Left ventricle myocardium inferior (tissue), 1 donor: ENCODE measurements at regions of chr20 and their contacts with region 1.

Region 1: GRCh38 chr20:8853805-8854338 is 215.0 kb upstream of the PLCB4 start:
- DNase-seq: no peak
- H3K4me3 ChIP-seq: peak overlapping the region; percentile 43
- H3K27ac ChIP-seq: peak overlapping the region; percentile 79
- H3K4me1 ChIP-seq: peaks cover 24% of the 10 kb centered on the region
- H3K27me3 ChIP-seq: no peaks in the 10 kb centered on the region
- CTCF ChIP-seq: peak; percentile 91

Region 2: GRCh38 chr20:7406671-7407070 is 1447.2 kb before region 1 on chr20:
- intact Hi-C with region 1: no loop called
- DNase-seq: no peak
- H3K4me3 ChIP-seq: no peak overlapping the region
- H3K27ac ChIP-seq: no peak overlapping the region
- H3K4me1 ChIP-seq: no peaks in the 10 kb centered on the region
- H3K27me3 ChIP-seq: peaks cover 8% of the 10 kb centered on the region
- CTCF ChIP-seq: no peak

Region 3: GRCh38 chr20:8583566-8584043 is 270.3 kb before region 1 on chr20:
- intact Hi-C with region 1: no loop called
- DNase-seq: no peak
- H3K4me3 ChIP-seq: no peak overlapping the region
- H3K27ac ChIP-seq: no peak overlapping the region
- H3K4me1 ChIP-seq: no peaks in the 10 kb centered on the region
- H3K27me3 ChIP-seq: no peaks in the 10 kb centered on the region
- CTCF ChIP-seq: no peak

Region 4: GRCh38 chr20:8946036-8946940 is 92.4 kb after region 1 on chr20:
- intact Hi-C with region 1: loop called (anchors 10 kb)
- DNase-seq: no peak
- H3K4me3 ChIP-seq: no peak overlapping the region
- H3K27ac ChIP-seq: peak overlapping the region; percentile 74
- H3K4me1 ChIP-seq: peaks cover 32% of the 10 kb centered on the region
- H3K27me3 ChIP-seq: no peaks in the 10 kb centered on the region
- CTCF ChIP-seq: no peak

Region 5: GRCh38 chr20:9130521-9130920 is 276.6 kb after region 1 on chr20:
- intact Hi-C with region 1: loop called (anchors 10 kb)
- DNase-seq: no peak
- H3K4me3 ChIP-seq: no peak overlapping the region
- H3K27ac ChIP-seq: peak overlapping the region; percentile 67
- H3K4me1 ChIP-seq: peaks cover 60% of the 10 kb centered on the region
- H3K27me3 ChIP-seq: no peaks in the 10 kb centered on the region
- CTCF ChIP-seq: no peak

Region 6: DNA sequence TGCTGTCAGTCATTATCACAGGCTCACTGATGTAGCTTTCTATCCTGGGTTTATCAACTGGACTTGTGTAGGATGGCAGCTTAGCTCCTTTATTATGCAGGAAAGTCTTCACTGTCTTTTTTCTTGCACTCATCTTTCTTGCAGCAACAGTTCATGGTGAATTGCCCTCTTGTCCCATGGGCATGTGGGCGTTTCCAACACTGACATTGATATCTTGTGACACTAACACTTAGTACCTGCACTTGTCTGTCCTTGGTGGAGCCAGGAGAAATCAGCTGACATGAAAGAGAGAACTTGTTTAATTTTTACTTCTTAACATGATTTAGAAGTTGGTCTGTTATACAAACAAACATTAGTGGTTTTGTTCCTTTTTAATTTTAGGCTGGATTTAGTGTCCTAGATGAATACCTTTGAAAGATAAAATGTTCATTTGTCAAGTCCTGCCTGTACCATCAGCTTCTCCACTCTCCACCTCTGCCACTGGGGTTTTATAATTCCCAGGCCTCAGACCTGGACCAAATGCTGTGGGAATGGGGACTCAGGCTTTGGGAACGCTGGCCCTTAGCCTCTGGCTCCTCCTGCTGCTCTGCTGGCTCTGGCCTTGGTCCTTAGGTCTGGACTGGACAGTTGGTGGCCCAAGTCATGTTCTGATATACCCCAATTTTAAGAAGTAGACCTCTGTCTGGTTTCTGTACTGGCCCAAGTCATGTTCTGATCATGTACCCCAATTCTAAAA is 499.5 kb after region 1 on chr20:
- intact Hi-C with region 1: loop called (anchors 5 kb)
- DNase-seq: peak; percentile 22
- H3K4me3 ChIP-seq: no peak overlapping the region
- H3K27ac ChIP-seq: peak overlapping the region; percentile 3
- H3K4me1 ChIP-seq: peaks cover 44% of the 10 kb centered on the region
- H3K27me3 ChIP-seq: no peaks in the 10 kb centered on the region
- CTCF ChIP-seq: peak; percentile 36